Activated B cell treated with CpG ODN at 0.5 μM for 24 hours (primary cell): ENCODE measurements at regions of chr7 and their contacts with region 1.

Region 1: GRCh38 chr7:131027287-131027773 is 293.3 kb upstream of the KLF14 start:
- DNase-seq: no peak
- ATAC-seq: peak; percentile 6
- H3K4me3 Mint-ChIP-seq: peak overlapping the region; percentile 66
- H3K27ac Mint-ChIP-seq: peak overlapping the region; percentile 98
- H3K4me1 Mint-ChIP-seq: peaks cover 93% of the 10 kb centered on the region
- H3K27me3 Mint-ChIP-seq: no peaks in the 10 kb centered on the region
- CTCF ChIP-seq: no peak

Region 2: GRCh38 chr7:130912862-130913631 is 114.3 kb before region 1 on chr7:
- CTCF ChIA-PET with region 1: no interaction called
- POLR2A ChIA-PET with region 1: interaction called, 3 read pairs
- intact Hi-C with region 1: loop called (anchors 2 kb)
- DNase-seq: peak; percentile 54
- ATAC-seq: peak; percentile 91
- H3K4me3 Mint-ChIP-seq: peak overlapping the region; percentile 87
- H3K27ac Mint-ChIP-seq: peak overlapping the region; percentile 90
- H3K4me1 Mint-ChIP-seq: peaks cover 86% of the 10 kb centered on the region
- H3K27me3 Mint-ChIP-seq: no peaks in the 10 kb centered on the region
- CTCF ChIP-seq: no peak

Region 3: GRCh38 chr7:130941322-130942210 is 85.8 kb before region 1 on chr7:
- CTCF ChIA-PET with region 1: no interaction called
- POLR2A ChIA-PET with region 1: interaction called, 4 read pairs
- intact Hi-C with region 1: loop called (anchors 1 kb)
- DNase-seq: no peak
- ATAC-seq: no peak
- H3K4me3 Mint-ChIP-seq: peak overlapping the region; percentile 78
- H3K27ac Mint-ChIP-seq: peak overlapping the region; percentile 84
- H3K4me1 Mint-ChIP-seq: peaks cover 90% of the 10 kb centered on the region
- H3K27me3 Mint-ChIP-seq: no peaks in the 10 kb centered on the region
- CTCF ChIP-seq: no peak

Region 4: DNA sequence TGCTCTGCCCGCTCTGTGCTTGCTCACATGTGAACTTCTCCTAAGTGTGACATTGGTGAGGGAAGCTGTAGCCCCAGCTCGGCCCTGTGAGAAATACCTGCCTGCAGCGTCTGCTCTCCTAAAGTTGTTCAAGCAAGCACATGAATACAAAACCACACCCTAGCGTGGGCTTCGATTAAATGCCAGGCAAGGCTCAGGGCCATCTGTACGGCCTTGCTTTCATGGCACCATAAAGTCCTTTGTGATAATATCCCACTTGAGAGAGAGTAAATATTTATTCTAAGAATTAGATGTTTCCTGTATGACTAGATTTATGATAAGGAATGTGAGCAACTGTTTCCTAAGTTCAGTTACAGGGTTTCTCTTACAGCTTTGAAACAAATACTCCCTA is 30.5 kb before region 1 on chr7:
- CTCF ChIA-PET with region 1: no interaction called
- POLR2A ChIA-PET with region 1: interaction called, 6 read pairs
- intact Hi-C with region 1: loop called (anchors 5 kb)
- DNase-seq: no peak
- ATAC-seq: peak; percentile 81
- H3K4me3 Mint-ChIP-seq: peak overlapping the region; percentile 4
- H3K27ac Mint-ChIP-seq: peak overlapping the region; percentile 79
- H3K4me1 Mint-ChIP-seq: peaks cover 77% of the 10 kb centered on the region
- H3K27me3 Mint-ChIP-seq: no peaks in the 10 kb centered on the region
- CTCF ChIP-seq: no peak

Region 5: GRCh38 chr7:131040467-131040932 is 13.2 kb after region 1 on chr7:
- CTCF ChIA-PET with region 1: interaction called, 12 read pairs
- POLR2A ChIA-PET with region 1: interaction called, 8 read pairs
- intact Hi-C with region 1: loop called (anchors 1 kb)
- DNase-seq: no peak
- ATAC-seq: peak; percentile 75
- H3K4me3 Mint-ChIP-seq: peak overlapping the region; percentile 60
- H3K27ac Mint-ChIP-seq: peak overlapping the region; percentile 81
- H3K4me1 Mint-ChIP-seq: peaks cover 56% of the 10 kb centered on the region
- H3K27me3 Mint-ChIP-seq: no peaks in the 10 kb centered on the region
- CTCF ChIP-seq: peak; percentile 61